ENCODE measurements at regions of chr3 and their contacts with region 1.

Region 1: DNA sequence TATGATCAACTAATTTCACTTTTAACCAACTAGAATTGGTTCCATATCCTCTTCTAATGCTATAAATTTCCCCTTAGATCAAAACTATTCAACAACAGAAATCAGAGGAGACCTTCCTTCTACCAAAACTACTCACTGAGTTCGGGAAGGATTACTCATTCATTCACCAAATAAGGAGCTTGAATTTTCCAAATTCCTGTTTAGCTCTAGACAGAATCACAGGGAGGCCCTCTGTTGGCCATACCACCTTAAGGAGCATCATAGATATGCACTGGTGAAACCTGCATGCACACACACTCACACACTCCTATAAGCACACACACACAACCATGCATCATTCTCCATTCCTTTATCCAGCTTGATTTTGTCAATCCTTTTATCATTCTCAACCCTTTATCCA is 49.0 kb downstream of the SUCLG2 start:
- DNase-seq: no peak
- H3K4me3 ChIP-seq: no peak overlapping the region
- H3K27ac ChIP-seq: no peak overlapping the region
- H3K4me1 ChIP-seq: no peaks in the 10 kb centered on the region
- CTCF ChIP-seq: 0 out of 2 replicates have a peak, but pooled peaks have one; percentile 16

Region 2: DNA sequence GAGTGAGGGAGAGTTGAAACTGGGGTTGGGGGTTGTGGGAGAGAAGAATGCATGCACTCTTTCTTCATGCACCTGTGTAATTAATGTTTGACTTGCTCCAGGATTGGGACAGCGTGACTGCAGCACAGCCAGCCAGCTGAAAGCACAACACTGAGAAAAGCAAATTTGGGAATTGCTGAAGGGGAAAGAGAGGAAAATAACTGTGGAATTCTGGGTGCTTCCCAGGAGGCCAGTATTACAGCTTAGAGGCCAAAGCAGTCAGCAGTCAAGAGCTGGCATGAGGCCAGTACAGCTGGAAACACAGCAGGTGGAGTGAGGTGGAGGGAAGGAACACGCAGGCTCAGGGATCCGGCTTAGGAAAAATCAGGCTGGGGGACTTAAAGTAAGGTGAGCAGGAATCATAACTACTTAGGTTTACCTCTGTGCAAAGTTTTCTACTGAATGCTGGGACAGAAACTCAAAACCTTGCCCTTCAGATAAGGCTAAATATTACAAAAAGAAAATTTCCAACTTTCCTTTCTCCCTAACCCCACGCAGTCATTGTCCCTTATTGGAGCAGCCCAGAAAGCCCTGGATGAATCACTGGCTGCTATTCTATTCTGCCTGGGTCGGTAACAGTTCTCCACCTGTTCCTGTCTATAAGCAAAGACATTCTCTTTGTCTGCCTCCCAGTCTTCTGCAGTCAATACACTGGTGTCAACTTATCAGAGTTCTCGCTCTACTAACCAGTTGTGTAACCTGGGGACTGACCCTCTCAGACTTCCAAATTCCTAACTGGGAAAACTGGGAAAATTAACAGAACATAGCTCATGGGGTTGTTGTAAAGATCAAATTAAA is 1733.9 kb before region 1 on chr3:
- CTCF ChIA-PET with region 1: no interaction called
- POLR2A ChIA-PET with region 1: no interaction called
- intact Hi-C with region 1: no loop called
- DNase-seq: no peak
- H3K4me3 ChIP-seq: no peak overlapping the region
- H3K27ac ChIP-seq: no peak overlapping the region
- H3K4me1 ChIP-seq: no peaks in the 10 kb centered on the region
- CTCF ChIP-seq: no peak

Region 3: DNA sequence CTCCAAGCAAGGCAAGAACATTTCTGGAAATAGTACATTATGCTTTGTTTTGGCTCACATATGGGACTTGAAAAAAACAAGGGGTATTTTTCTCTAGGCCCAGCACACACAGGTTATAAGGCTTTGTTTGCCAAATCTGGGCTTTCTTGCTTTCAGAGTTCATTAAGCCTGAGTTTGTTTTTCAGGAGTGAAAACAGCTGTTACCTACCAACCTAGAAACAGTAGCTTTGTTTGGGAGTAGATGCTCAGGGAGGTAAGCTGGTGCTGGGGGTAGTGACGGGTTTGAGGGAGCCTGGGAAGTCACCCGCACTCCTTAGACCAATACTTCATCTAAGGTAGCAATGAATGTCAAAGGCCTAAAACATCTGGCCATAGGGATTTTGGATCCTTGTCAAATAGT is 366.0 kb before region 1 on chr3:
- CTCF ChIA-PET with region 1: no interaction called
- POLR2A ChIA-PET with region 1: no interaction called
- intact Hi-C with region 1: no loop called
- DNase-seq: no peak
- H3K4me3 ChIP-seq: no peak overlapping the region
- H3K27ac ChIP-seq: no peak overlapping the region
- H3K4me1 ChIP-seq: no peaks in the 10 kb centered on the region
- CTCF ChIP-seq: no peak

Region 4: GRCh38 chr3:67302489-67302888 is 302.9 kb before region 1 on chr3:
- CTCF ChIA-PET with region 1: no interaction called
- POLR2A ChIA-PET with region 1: no interaction called
- intact Hi-C with region 1: no loop called
- DNase-seq: no peak
- H3K4me3 ChIP-seq: no peak overlapping the region
- H3K27ac ChIP-seq: no peak overlapping the region
- H3K4me1 ChIP-seq: no peaks in the 10 kb centered on the region
- CTCF ChIP-seq: no peak

Region 5: GRCh38 chr3:67384760-67385397 is 220.5 kb before region 1 on chr3:
- CTCF ChIA-PET with region 1: no interaction called
- POLR2A ChIA-PET with region 1: no interaction called
- intact Hi-C with region 1: loop called (anchors 10 kb)
- DNase-seq: peak; percentile 63
- H3K4me3 ChIP-seq: no peak overlapping the region
- H3K27ac ChIP-seq: no peak overlapping the region
- H3K4me1 ChIP-seq: peaks cover 8% of the 10 kb centered on the region
- CTCF ChIP-seq: peak; percentile 85

Region 6: DNA sequence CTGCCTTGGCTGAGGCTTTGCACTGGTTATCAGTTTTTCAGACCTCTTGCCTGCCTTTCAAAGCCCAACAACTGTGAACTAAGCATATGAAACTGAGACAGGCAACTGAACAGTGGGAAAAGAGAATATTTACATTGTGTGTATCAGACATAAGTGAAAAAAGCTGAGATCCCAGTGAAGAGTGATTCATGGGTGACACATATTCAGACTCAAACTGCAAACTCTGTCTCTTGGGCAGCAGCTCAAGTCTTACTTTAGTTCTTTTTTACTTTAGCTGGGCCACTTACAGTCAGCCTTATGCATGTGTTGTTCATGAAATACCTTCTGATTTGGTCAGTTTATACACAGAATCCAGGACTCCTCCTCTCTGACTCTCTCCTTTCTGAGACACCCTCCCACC is 29.9 kb after region 1 on chr3:
- CTCF ChIA-PET with region 1: no interaction called
- POLR2A ChIA-PET with region 1: no interaction called
- intact Hi-C with region 1: no loop called
- DNase-seq: no peak
- H3K4me3 ChIP-seq: no peak overlapping the region
- H3K27ac ChIP-seq: no peak overlapping the region
- H3K4me1 ChIP-seq: no peaks in the 10 kb centered on the region
- CTCF ChIP-seq: no peak